ENCODE measurements at regions of chr10 and their contacts with region 1.

Region 1: DNA sequence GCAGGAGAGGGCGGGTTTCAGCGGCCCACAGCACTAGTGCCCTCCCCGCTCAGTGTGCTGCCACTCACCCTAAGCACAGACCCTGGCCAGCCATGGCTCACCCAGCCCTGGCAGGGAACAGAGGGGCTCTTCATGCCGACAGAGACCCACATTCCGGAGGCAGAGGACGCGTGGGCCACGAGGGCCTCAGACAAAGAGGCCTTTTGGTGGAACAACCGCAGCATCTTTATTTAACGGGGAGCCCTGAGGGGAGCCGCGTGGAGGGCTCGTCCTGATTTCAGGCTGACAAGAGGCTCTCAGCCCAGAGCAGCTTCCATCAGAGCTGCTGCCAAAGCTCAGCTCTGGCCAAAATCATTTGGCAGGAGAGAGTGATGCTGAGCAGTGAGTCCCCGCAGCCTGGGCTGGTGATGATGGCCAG is 127.8 kb downstream of the SH3PXD2A start:
- DNase-seq: peak; percentile 60 to 87 (median 86)
- ATAC-seq: peak; percentile 76 to 89
- H3K4me3 ChIP-seq: no peak overlapping the region
- H3K27ac ChIP-seq: no peak overlapping the region
- H3K4me1 ChIP-seq: no peaks in the 10 kb centered on the region
- H3K27me3 ChIP-seq: no peaks in the 10 kb centered on the region

Region 2: DNA sequence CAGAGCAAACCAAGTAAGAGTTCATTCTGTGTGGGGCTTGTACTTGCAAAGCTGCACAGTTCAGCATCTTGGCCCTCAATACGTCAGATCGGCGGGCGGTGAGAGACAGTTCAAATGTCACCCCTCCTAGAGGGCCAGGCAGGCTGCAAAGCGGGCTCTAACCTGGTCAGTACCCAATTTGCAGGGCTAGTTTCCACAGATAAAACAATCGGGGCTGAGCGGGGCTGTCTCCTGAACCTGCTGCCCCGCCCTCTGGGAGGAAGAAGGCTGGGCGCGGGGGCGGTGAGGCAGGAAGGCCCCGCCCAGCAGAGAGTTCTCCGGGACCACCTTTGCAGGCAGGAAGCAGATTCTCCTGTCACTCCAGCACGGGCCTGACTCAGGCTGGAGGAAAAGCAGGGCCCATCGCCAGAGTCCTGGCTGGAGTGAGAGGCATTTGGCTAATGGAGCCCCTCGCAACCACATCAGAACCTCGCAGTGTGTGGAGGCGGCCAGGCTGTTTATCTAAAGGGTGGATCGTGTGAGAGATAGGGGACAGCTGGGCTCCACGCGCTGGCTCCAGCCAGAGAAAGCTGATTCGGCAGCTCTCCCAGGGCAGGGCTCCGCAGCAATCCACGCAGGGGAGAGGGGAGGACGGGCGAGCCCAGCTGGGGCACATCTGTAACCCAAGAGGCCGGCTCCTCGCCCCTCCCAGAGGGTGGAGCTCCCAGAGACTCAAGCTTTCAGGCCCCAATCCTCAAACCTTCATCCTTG is 44.7 kb after region 1 on chr10:
- intact Hi-C with region 1: loop called in 1 of 4 experiments (anchors 10 kb)
- DNase-seq: peak; percentile 90 to 96 (median 95)
- ATAC-seq: peak; percentile 94 to 95
- H3K4me3 ChIP-seq: peak overlapping the region; percentile 22
- H3K27ac ChIP-seq: peak overlapping the region; percentile 52
- H3K4me1 ChIP-seq: no peaks in the 10 kb centered on the region
- H3K27me3 ChIP-seq: no peaks in the 10 kb centered on the region

Region 3: DNA sequence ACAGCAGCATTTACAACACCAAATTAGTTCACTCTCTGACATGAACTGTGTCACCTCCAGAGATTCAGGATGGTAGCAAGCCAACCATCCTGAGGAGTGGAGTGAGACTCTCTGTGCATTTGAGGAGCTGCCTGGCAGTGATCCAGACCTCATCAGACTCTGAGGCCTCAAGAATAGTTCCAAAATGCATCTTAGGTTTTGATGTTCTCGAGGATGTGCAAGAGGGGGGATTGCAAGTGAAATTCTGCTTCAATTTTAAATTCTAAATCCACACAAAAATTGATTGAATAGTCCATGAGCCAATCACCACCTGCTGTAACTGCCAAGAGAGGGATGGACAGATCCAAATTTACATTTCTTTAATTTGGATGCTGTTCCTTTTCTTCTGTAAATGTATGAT is 289.1 kb after region 1 on chr10:
- intact Hi-C with region 1: no loop called
- DNase-seq: no peak
- ATAC-seq: no peak
- H3K4me3 ChIP-seq: no peak overlapping the region
- H3K27ac ChIP-seq: no peak overlapping the region
- H3K4me1 ChIP-seq: no peaks in the 10 kb centered on the region
- H3K27me3 ChIP-seq: no peaks in the 10 kb centered on the region

Measured in right cardiac atrium (tissue), 5 donors.